ENCODE measurements at regions of chr1 and their contacts with region 1.

Region 1: GRCh38 chr1:7902478-7903085 is 38.1 kb downstream of the TNFRSF9 start:
- DNase-seq: peak; percentile 75
- H3K4me3 ChIP-seq: no peak overlapping the region
- H3K27ac ChIP-seq: no peak overlapping the region
- H3K4me1 ChIP-seq: no peaks in the 10 kb centered on the region
- H3K27me3 ChIP-seq: no peaks in the 10 kb centered on the region
- CTCF ChIP-seq: peak; percentile 45

Region 2: DNA sequence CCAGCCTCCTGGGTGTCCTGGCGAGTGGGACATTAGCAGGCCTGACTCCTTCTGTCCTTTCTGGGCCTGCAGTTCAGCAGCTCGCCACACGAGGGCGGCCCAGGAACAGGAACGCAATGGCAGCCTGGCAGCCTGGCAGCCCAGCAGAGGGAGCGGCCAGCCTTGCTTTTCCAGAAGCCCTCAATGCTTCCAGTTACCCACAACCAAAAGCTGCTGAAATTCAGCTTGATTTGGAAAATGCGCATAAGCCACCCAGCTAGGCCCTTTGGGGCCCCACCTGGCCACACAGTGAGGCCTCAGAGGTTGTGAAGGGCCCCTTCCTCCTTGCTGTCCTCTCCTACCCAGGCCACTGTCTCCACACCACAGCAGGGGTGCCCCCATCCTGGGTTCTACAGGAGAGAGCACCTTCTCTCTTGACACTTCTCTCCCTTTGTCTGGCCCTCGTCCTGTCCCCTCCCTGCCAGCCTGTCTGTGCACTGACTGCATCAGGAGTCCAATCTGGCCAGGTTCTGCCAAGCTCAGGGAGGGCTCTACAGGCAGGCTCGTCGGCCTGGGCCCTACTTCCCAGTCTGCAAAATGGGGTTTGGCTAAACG is 234.9 kb before region 1 on chr1:
- intact Hi-C with region 1: loop called (anchors 5 kb)
- DNase-seq: peak; percentile 90
- H3K4me3 ChIP-seq: no peak overlapping the region
- H3K27ac ChIP-seq: no peak overlapping the region
- H3K4me1 ChIP-seq: no peaks in the 10 kb centered on the region
- H3K27me3 ChIP-seq: no peaks in the 10 kb centered on the region
- CTCF ChIP-seq: peak; percentile 99

Region 3: GRCh38 chr1:7752512-7753417 is 149.8 kb before region 1 on chr1:
- intact Hi-C with region 1: loop called (anchors 5 kb)
- DNase-seq: peak; percentile 65
- H3K4me3 ChIP-seq: no peak overlapping the region
- H3K27ac ChIP-seq: no peak overlapping the region
- H3K4me1 ChIP-seq: no peaks in the 10 kb centered on the region
- H3K27me3 ChIP-seq: no peaks in the 10 kb centered on the region
- CTCF ChIP-seq: peak; percentile 74

Region 4: DNA sequence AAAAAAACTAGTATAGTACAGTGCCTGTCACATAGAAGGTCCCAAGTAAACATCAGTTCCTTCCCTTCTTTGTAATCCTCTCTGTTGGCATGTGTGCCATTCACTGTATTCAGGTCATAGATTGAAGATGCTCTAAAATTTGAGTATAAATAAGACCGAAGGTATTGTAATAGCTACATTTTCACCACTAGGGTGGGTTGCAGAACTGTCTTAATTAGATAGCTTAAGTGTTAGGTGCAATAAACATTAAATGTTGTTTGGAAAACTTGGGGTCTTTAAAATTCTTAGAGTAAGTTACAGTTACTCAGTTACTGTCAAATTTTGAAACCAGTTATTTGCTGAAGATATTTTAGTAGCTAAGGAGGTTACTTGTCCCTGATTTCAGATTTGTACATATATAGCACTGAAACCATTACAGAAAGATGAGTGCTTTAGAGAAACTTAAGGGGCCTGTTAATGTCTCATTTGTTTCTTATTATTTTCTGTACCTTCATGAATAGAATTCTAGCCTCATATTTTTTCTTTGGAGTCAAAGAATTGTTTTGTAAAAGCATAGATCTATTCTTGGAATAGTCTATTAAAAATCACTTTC is 94.2 kb before region 1 on chr1:
- intact Hi-C with region 1: loop called (anchors 5 kb)
- DNase-seq: no peak
- H3K4me3 ChIP-seq: no peak overlapping the region
- H3K27ac ChIP-seq: no peak overlapping the region
- H3K4me1 ChIP-seq: no peaks in the 10 kb centered on the region
- H3K27me3 ChIP-seq: no peaks in the 10 kb centered on the region
- CTCF ChIP-seq: peak; percentile 42

Measured in colonic mucosa (tissue), 4 donors.